Panc1 (cell line): ENCODE measurements at regions of chr19 and their contacts with region 1.

Region 1: DNA sequence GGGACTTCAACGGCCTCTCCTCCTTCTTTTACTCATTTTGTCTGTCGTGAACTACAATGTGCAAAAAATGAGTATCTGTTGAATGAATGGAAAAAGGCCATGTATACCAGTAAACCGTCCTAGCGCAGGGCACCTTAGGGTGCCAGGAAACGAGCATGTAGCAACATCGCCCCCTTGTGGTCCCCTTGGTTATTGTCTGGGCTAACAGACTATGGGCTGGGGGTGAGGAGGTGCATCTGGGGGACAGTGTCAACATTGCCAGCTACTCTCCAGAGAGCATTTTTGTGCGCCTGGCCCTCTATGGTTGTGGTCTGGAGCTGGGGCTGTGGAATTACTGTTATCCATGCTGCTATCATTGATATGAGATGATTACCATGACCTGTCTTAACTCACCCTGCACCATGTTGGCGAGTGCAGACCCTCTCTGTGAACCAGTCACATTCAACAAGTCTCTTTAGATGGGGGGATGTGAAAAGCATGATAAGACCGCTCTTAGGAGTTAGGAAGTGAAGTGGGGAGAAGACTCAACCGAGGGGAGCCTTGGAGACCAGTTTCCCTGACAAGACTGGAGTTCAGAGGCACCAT is 22.8 kb upstream of the SIGLEC11 start:
- DNase-seq: peak; percentile 20
- ATAC-seq: peak; percentile 80
- H3K4me3 ChIP-seq: no peak overlapping the region
- H3K27ac ChIP-seq: no peak overlapping the region
- H3K4me1 ChIP-seq: no peaks in the 10 kb centered on the region
- H3K27me3 ChIP-seq: no peaks in the 10 kb centered on the region
- CTCF ChIP-seq: peak; percentile 89

Region 2: GRCh38 chr19:49937750-49938381 is 45.9 kb before region 1 on chr19:
- CTCF ChIA-PET with region 1: interaction called, 4 read pairs
- POLR2A ChIA-PET with region 1: no interaction called
- in situ Hi-C with region 1: no loop called
- intact Hi-C with region 1: loop called (anchors 2 kb)
- DNase-seq: no peak
- ATAC-seq: peak; percentile 90
- H3K4me3 ChIP-seq: peak overlapping the region; percentile 20 to 40
- H3K27ac ChIP-seq: no peak overlapping the region
- H3K4me1 ChIP-seq: no peaks in the 10 kb centered on the region
- H3K27me3 ChIP-seq: no peaks in the 10 kb centered on the region
- CTCF ChIP-seq: peak; percentile 93